PC-9 (cell line): ENCODE measurements at regions of chr2 and their contacts with region 1.

Region 1: DNA sequence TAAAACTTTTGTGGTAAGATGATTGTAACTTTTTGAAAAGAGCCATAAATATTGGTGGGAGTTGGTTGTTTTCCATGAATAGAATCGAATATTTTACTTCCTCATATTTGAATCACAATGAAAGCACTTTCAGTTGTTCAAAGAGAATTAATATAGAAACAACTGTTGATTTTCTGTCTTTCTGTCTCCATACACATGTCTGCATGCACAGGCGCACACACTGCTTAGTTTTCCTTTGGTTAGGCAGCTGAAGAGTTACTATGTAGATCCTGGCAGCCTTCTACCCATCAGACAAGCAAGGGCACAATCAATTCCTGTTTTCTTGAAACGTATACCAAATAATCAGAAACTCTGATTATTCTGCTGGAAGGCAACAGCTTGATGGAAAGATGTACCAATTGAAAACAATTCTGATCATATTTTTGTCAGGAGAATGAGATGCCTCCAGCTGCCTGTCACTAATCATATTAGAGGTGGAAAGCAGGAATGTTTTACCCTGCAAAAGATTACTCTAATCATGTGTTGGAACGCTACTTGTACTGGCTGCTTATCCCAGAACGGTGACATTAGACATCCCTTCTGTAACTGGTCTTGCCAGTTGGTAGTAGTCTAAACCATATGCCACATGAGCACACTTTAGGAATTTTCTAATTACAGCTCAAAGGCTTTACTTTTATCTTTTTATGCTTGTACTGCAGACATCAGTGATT is 24.0 kb downstream of the SPATS2L start:
- DNase-seq: no peak
- H3K4me3 ChIP-seq: no peak overlapping the region
- H3K27ac ChIP-seq: no peak overlapping the region
- H3K4me1 ChIP-seq: peaks cover 6% of the 10 kb centered on the region
- H3K27me3 ChIP-seq: no peaks in the 10 kb centered on the region
- CTCF ChIP-seq: no peak

Region 2: GRCh38 chr2:199111458-199111857 is 1219.0 kb before region 1 on chr2:
- CTCF ChIA-PET with region 1: no interaction called
- POLR2A ChIA-PET with region 1: no interaction called
- intact Hi-C with region 1: no loop called
- DNase-seq: no peak
- H3K4me3 ChIP-seq: no peak overlapping the region
- H3K27ac ChIP-seq: no peak overlapping the region
- H3K4me1 ChIP-seq: no peaks in the 10 kb centered on the region
- H3K27me3 ChIP-seq: no peaks in the 10 kb centered on the region
- CTCF ChIP-seq: no peak

Region 3: DNA sequence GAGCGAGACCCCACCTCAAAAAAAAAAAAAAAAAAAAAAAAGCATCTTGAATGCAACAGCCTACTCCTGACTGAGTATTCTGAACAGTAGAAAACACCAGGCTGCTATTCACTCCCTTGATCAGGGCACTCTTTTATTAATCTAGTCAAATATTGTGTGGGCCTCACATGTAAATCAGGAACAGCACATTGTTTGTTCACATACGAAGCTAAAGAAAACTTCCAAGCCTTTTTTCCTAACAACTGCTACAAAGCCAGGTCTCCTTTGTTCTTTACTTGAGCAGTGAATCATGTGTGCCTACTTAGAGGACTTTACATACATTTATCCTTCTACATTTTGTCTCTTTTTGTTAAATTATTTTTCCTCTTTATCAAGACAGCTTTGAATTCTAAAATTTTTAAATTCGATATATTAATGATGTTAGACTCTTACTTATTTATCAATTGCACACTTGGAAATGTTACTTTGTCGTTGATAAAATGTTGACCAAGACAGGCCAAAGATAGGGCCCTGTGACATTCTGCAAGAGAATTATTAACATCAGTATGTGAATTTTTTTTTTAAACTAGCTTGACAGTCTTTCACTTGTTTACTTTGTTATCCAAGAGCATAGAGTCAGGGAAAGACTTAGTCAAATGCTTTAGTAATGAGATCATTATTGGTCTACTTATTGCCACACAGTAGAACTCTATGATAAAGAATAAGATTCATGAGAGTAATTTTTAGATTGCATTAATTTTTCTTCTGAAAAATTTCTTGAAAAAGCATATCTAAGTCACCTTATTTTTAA is 10.8 kb before region 1 on chr2:
- CTCF ChIA-PET with region 1: no interaction called
- POLR2A ChIA-PET with region 1: interaction called, 12 read pairs
- intact Hi-C with region 1: no loop called
- DNase-seq: peak in 1 of 2 experiments; percentile 86
- H3K4me3 ChIP-seq: 0 out of 2 replicates have a peak overlapping the region, but pooled peaks have one; percentile 31
- H3K27ac ChIP-seq: peak overlapping the region; percentile 89
- H3K4me1 ChIP-seq: peaks cover 79% of the 10 kb centered on the region
- H3K27me3 ChIP-seq: no peaks in the 10 kb centered on the region
- CTCF ChIP-seq: no peak